ENCODE measurements at regions of chr1 and their contacts with region 1.

Region 1: DNA sequence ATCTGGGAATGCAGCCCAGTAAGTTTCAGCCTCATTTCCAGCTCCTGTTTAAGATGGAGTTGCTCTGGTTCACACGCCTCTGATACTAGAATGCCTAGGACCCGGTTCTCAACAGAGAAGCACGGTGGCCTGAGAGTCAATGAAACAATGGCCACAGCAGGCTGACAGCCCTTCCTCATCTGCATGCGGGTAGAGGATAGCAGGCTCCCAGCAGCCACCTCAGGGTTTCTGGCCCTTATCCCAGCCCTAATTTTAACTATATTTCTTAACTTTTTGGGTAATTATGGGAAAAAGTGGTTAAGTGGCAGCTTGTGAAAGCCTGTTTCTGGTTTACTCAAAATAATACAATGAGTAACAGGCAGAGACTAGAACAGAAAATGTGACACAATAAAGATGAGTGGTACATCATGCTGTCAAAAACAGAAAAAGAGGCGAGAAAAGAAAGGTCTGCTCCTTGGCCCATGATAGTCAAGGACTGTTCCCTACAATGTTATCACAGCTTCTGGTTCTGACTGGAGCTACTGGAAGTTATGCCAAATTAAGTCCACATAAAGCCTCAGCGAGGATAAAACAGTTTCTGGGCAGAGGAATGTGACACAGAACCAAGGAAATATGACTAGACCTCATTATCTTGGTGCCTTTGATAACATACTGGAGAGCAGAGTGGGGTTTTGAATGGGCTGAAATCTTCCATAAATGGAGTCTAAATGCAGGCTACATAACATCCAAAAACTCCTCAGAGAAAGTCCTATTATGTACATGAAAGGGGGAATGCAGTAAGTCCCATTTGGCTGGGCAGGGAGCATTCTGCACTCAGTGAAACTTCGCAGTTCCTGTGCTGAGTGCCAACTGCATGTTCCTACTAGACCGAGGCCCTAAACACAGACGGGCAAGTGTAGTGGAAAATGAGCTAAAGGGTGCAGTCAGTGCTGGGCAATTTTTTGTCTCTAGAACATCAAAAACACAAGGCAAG is 92.1 kb downstream of the NIBAN1 start:
- DNase-seq: no peak
- ATAC-seq: peak; percentile 56 to 84 (median 72)
- H3K4me3 ChIP-seq: no peak overlapping the region
- H3K27ac ChIP-seq: peak overlapping the region; percentile 57 to 92 (median 78)
- H3K4me1 ChIP-seq: peaks cover 0 to 97% (median 79%) of the 10 kb centered on the region in 9 donors
- H3K27me3 ChIP-seq: no peaks in the 10 kb centered on the region
- CTCF ChIP-seq: no peak

Region 2: GRCh38 chr1:184827600-184828368 is 54.4 kb before region 1 on chr1:
- intact Hi-C with region 1: loop called in 3 of 10 experiments (anchors 2 to 10 kb)
- DNase-seq: peak in 1 of 2 donors; percentile 41
- ATAC-seq: peak; percentile 73 to 91 (median 86)
- H3K4me3 ChIP-seq: no peak overlapping the region
- H3K27ac ChIP-seq: peak overlapping the region; percentile 76 to 94 (median 86)
- H3K4me1 ChIP-seq: peaks cover 6 to 75% (median 65%) of the 10 kb centered on the region in 9 donors
- H3K27me3 ChIP-seq: no peaks in the 10 kb centered on the region
- CTCF ChIP-seq: no peak

Region 3: DNA sequence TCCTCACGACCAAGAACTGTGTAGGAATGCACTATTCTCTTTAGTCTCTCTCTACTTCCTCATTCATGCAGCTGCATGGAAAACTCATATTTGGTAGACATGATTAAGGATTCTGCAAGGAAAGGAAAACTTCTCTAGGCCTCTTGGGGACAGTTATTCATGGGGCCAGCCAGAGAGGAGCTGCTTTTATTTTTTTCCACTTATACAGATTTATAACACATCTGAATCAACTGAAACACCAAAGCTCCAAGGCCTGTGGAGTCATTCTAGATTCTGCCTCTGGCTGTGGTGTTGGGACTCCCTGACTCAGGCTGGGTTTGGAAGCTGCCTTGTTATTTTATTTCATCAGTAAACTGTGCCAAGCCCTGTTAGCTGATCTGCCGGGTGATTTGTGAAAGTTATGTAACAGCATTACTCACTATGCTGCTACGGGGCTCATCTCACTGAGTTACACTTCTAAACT is 43.7 kb before region 1 on chr1:
- intact Hi-C with region 1: loop called in 1 of 10 experiments (anchors 10 kb)
- DNase-seq: peak in 1 of 2 donors; percentile 61
- ATAC-seq: peak; percentile 75 to 89 (median 84)
- H3K4me3 ChIP-seq: no peak overlapping the region
- H3K27ac ChIP-seq: peak overlapping the region; percentile 24 to 86 (median 68)
- H3K4me1 ChIP-seq: peaks cover 19 to 60% (median 41%) of the 10 kb centered on the region in 9 donors
- H3K27me3 ChIP-seq: no peaks in the 10 kb centered on the region
- CTCF ChIP-seq: no peak

Region 4: GRCh38 chr1:185267301-185267700 is 385.1 kb after region 1 on chr1:
- intact Hi-C with region 1: no loop called
- DNase-seq: no peak
- ATAC-seq: no peak
- H3K4me3 ChIP-seq: no peak overlapping the region
- H3K27ac ChIP-seq: peak overlapping the region in 1 of 10 donors; percentile 2
- H3K4me1 ChIP-seq: no peaks in the 10 kb centered on the region
- H3K27me3 ChIP-seq: no peaks in the 10 kb centered on the region
- CTCF ChIP-seq: no peak